ENCODE measurements at regions of chr4 and their contacts with region 1.

Region 1: DNA sequence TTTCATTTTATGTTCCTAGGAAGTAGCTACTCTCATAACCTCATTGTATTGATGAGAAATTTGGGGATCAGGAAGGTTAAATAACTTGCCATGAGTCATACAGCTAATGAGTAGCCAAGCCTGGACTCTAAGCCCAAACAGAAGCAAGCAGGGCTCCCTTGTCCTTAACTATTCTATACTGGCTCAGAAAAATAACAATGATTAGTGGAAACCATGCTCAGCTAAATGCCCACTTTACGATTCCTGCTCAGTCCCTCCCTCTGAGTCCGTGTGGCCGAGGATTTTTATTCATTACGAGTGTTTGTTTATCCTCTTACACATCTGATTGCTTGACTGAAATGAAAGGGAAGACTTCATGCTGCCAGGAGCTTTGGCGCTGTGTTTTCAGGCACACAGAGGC is 100.9 kb downstream of the SLC34A2 start:
- DNase-seq: no peak
- H3K4me3 Mint-ChIP-seq: no peak overlapping the region
- H3K27ac Mint-ChIP-seq: no peak overlapping the region
- H3K4me1 Mint-ChIP-seq: no peaks in the 10 kb centered on the region
- H3K27me3 Mint-ChIP-seq: no peaks in the 10 kb centered on the region

Region 2: DNA sequence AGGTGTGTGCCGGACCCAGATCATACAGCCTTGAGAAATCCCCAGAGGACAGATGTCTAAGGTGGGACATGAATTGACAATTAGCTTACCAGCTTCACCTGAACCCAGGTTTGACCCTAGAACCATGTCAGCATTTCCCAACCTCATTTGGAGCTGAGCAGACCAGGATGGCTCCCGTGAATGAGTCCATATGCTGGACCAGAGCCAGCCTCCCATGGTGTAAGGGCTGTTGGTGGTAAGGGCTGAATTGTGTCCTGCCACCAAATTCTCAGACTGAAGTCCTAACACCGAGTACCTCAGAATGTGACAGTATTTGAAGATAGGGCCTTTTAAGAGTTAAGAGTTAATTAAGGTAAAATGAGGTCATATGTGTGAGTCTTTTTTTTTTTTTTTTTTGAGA is 12.5 kb before region 1 on chr4:
- CTCF ChIA-PET with region 1: no interaction called
- POLR2A ChIA-PET with region 1: no interaction called
- DNase-seq: no peak
- H3K4me3 Mint-ChIP-seq: no peak overlapping the region
- H3K27ac Mint-ChIP-seq: no peak overlapping the region
- H3K4me1 Mint-ChIP-seq: no peaks in the 10 kb centered on the region
- H3K27me3 Mint-ChIP-seq: no peaks in the 10 kb centered on the region

Region 3: GRCh38 chr4:25767877-25768725 is 11.6 kb after region 1 on chr4:
- CTCF ChIA-PET with region 1: interaction called, 12 read pairs
- POLR2A ChIA-PET with region 1: no interaction called
- DNase-seq: peak; percentile 17
- H3K4me3 Mint-ChIP-seq: no peak overlapping the region
- H3K27ac Mint-ChIP-seq: no peak overlapping the region
- H3K4me1 Mint-ChIP-seq: no peaks in the 10 kb centered on the region
- H3K27me3 Mint-ChIP-seq: no peaks in the 10 kb centered on the region